ENCODE measurements at regions of chr2 and their contacts with region 1.

Region 1: DNA sequence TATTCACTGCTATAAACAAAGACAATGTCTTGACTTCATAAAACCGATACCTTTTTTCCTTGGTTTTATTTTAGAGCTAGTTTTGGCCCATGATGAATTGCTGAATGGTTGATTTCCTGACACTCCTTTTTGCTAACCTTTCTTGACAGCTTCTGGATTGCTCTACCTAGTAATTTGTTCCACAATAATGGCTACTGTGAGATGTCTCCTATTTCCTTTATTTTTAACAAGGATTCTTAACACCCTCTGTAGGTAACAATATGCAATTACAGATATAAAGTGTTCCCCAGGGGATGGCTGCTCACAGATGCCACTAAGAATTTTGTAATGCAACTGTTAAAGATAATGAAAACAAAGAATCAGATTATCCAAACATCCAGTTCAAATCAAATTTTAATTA is 100.8 kb upstream of the ATP5MC3 start:
- DNase-seq: peak; percentile 27
- ATAC-seq: peak; percentile 94
- H3K4me3 ChIP-seq: no peak overlapping the region
- H3K27ac ChIP-seq: no peak overlapping the region
- H3K4me1 ChIP-seq: no peaks in the 10 kb centered on the region
- H3K27me3 ChIP-seq: no peaks in the 10 kb centered on the region
- CTCF ChIP-seq: peak; percentile 31 to 75 (median 58); a peak in 5 of 6 replicates
- POLR2A ChIP-seq: no peak
- RAD21 ChIP-seq: peak; percentile 69

Region 2: GRCh38 chr2:175030380-175031271 is 251.7 kb before region 1 on chr2:
- CTCF ChIA-PET with region 1: interaction called, 4 read pairs
- POLR2A ChIA-PET with region 1: no interaction called
- RAD21 ChIA-PET with region 1: no interaction called
- intact Hi-C with region 1: loop called (anchors 2 kb)
- DNase-seq: peak; percentile 16
- ATAC-seq: peak; percentile 99
- H3K4me3 ChIP-seq: no peak overlapping the region
- H3K27ac ChIP-seq: no peak overlapping the region
- H3K4me1 ChIP-seq: no peaks in the 10 kb centered on the region
- H3K27me3 ChIP-seq: no peaks in the 10 kb centered on the region
- CTCF ChIP-seq: peak; percentile 44 to 58 (median 47); a peak in 4 of 6 replicates
- POLR2A ChIP-seq: no peak
- RAD21 ChIP-seq: peak; percentile 72

Region 3: GRCh38 chr2:175111200-175111657 is 171.1 kb before region 1 on chr2:
- CTCF ChIA-PET with region 1: no interaction called
- POLR2A ChIA-PET with region 1: no interaction called
- RAD21 ChIA-PET with region 1: no interaction called
- intact Hi-C with region 1: loop called (anchors 10 kb)
- DNase-seq: peak; percentile 31
- ATAC-seq: peak; percentile 61; the same call in 1 of the 2 replicates
- H3K4me3 ChIP-seq: no peak overlapping the region
- H3K27ac ChIP-seq: no peak overlapping the region
- H3K4me1 ChIP-seq: no peaks in the 10 kb centered on the region
- H3K27me3 ChIP-seq: no peaks in the 10 kb centered on the region
- CTCF ChIP-seq: peak; percentile 45 to 74 (median 47); a peak in 5 of 6 replicates
- POLR2A ChIP-seq: no peak
- RAD21 ChIP-seq: peak; percentile 67

Region 4: DNA sequence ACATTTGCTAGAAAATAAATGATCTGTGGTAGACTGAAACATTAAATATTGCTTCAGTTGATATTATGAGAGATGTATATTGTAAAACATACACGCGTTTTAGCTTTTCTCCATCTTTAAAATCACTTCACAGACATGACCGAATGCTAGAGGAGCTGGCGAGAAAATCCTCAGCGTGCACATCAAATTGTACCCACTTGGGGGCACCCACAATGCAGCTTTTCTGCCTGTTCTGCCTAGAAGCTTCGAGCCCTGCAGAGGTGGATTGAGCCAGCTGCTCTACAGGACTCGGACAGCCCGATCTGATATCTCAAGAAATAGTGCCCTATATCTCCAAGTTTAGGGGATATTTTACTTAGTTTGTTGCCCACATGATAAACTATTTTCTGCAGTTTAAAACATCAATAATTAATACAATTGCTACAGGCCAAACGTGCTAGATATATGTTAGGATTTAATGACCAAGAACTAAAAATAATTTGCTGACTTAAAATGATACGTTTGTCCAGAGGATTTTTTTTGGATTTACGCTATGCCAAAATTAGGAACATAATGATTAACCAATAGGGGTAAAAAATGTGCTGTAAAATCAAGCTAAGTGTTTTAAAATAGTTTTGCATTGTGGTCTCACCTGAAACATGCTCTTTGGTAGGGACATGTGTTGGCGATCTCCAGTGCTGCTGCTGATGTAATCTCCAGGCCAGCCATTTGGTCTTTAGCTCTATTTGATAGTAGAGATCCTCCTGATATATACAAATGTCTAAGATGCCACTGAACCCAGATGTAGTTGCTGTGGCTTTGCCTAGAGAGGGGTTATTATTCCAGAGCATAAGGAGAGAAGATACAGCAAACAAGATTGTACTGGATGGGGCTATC is 78.4 kb before region 1 on chr2:
- CTCF ChIA-PET with region 1: interaction called, 18 read pairs
- POLR2A ChIA-PET with region 1: no interaction called
- RAD21 ChIA-PET with region 1: no interaction called
- intact Hi-C with region 1: loop called (anchors 5 kb)
- DNase-seq: peak; percentile 57
- ATAC-seq: peak; percentile 100
- H3K4me3 ChIP-seq: peak overlapping the region in 1 of 2 experiments; percentile 27; a peak in 2 of 4 replicates
- H3K27ac ChIP-seq: no peak overlapping the region
- H3K4me1 ChIP-seq: peaks cover 0 to 9% of the 10 kb centered on the region in 2 experiments; a peak in 1 of 4 replicates
- H3K27me3 ChIP-seq: no peaks in the 10 kb centered on the region
- CTCF ChIP-seq: peak; percentile 53 to 74 (median 71)
- POLR2A ChIP-seq: no peak
- RAD21 ChIP-seq: peak; percentile 65

Region 5: DNA sequence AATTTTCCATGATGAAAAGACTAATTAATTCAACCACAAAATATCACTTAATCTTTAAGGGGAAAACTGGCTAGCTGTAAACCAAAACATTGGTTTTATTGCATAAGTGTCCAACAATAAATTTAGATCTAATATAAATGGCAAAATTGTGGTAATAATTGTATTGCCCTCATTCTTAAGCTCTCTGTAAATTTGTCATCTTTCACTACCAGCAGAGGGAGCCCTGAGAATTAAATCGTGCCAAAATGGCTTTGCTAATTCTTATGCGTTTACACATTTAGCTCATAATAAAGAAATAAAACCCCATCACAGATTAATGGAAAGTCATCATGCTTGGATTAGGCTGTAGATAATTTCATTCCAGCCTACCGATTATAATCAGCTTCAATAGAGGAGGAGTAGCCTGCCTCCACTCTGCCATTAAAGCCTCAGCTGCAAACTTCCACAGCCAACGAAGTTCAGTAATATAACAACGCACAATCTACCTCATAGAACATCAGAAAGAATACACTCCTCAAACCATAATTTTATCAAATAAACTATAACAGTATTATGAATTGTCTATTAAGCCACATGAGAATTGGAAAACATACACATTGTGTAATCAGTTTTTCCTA is 30.8 kb before region 1 on chr2:
- CTCF ChIA-PET with region 1: interaction called, 15 read pairs
- POLR2A ChIA-PET with region 1: no interaction called
- RAD21 ChIA-PET with region 1: no interaction called
- intact Hi-C with region 1: no loop called
- DNase-seq: peak; percentile 24
- ATAC-seq: peak; percentile 75
- H3K4me3 ChIP-seq: no peak overlapping the region
- H3K27ac ChIP-seq: no peak overlapping the region
- H3K4me1 ChIP-seq: no peaks in the 10 kb centered on the region
- H3K27me3 ChIP-seq: no peaks in the 10 kb centered on the region
- CTCF ChIP-seq: peak; percentile 53 to 78 (median 65); a peak in 5 of 6 replicates
- POLR2A ChIP-seq: no peak
- RAD21 ChIP-seq: peak; percentile 51

Measured in HCT116 (cell line).